ENCODE measurements at regions of chr2 and their contacts with region 1.

Region 1: DNA sequence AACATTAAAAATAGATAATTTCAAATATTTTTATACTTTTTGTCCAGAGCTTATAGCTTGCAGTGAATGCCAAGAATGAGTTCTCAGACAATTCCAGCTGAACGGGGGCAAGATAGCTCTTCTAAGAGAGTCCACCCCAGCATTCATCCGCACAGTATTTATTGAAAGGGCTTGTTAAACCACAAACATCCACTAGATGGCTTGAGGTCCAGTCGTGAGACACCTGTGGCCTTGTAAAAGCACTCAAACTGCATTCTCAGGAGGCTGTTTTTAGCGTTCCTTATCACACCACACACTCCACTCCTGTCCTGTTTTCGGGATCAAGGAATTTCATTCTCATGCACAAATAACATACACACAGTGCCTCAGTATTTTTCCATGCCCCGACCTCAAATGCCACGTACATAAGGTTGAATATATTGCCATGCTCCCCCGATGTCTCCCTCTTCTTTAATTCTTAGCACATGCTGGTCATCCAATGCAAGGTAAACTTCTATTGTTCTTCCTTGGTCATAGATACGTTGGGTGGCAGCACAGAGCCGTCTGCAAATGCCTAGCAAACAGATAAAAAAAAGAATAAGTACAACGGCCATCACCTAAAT is 47.4 kb downstream of the DNAJC10 start:
- DNase-seq: no peak
- ATAC-seq: peak in 3 of 4 donors; percentile 46 to 53 (median 53)
- H3K4me3 ChIP-seq: no peak overlapping the region
- H3K27ac ChIP-seq: peak overlapping the region in 1 of 12 donors; percentile 16
- H3K4me1 ChIP-seq: peaks cover 0 to 25% (median 7%) of the 10 kb centered on the region in 12 donors
- H3K27me3 ChIP-seq: no peaks in the 10 kb centered on the region
- CTCF ChIP-seq: peak; percentile 29 to 65 (median 54)
- POLR2A ChIP-seq: no peak

Region 2: GRCh38 chr2:182447863-182448262 is 315.5 kb before region 1 on chr2:
- intact Hi-C with region 1: no loop called
- DNase-seq: no peak
- ATAC-seq: peak in 2 of 4 donors; percentile 36 to 58
- H3K4me3 ChIP-seq: no peak overlapping the region
- H3K27ac ChIP-seq: no peak overlapping the region
- H3K4me1 ChIP-seq: peaks cover 0 to 37% (median 10%) of the 10 kb centered on the region in 12 donors
- H3K27me3 ChIP-seq: no peaks in the 10 kb centered on the region
- CTCF ChIP-seq: no peak
- POLR2A ChIP-seq: no peak

Region 3: GRCh38 chr2:183089192-183089851 is 325.9 kb after region 1 on chr2:
- intact Hi-C with region 1: loop called in 1 of 10 experiments (anchors 10 kb)
- DNase-seq: no peak
- ATAC-seq: no peak
- H3K4me3 ChIP-seq: no peak overlapping the region
- H3K27ac ChIP-seq: no peak overlapping the region
- H3K4me1 ChIP-seq: peaks cover 0 to 3% (median 0%) of the 10 kb centered on the region in 12 donors
- H3K27me3 ChIP-seq: no peaks in the 10 kb centered on the region
- CTCF ChIP-seq: no peak
- POLR2A ChIP-seq: no peak

Region 4: GRCh38 chr2:183666031-183666430 is 902.6 kb after region 1 on chr2:
- intact Hi-C with region 1: no loop called
- DNase-seq: no peak
- ATAC-seq: no peak
- H3K4me3 ChIP-seq: no peak overlapping the region
- H3K27ac ChIP-seq: no peak overlapping the region
- H3K4me1 ChIP-seq: peaks cover 0 to 16% (median 0%) of the 10 kb centered on the region in 12 donors
- H3K27me3 ChIP-seq: no peaks in the 10 kb centered on the region
- CTCF ChIP-seq: no peak
- POLR2A ChIP-seq: no peak